Activated CD4-positive, alpha-beta T cell treated with anti-CD3 and anti-CD28 coated beads for 36 hours (primary cell): ENCODE measurements at regions of chr5 and their contacts with region 1.

Region 1: GRCh38 chr5:178204182-178204894 is at the start of gene HNRNPAB:
- DNase-seq: peak; percentile 97
- ATAC-seq: peak; percentile 84
- H3K4me3 Mint-ChIP-seq: peak within 1 kb of the TSS; percentile 82
- H3K27ac Mint-ChIP-seq: peak within 1 kb of the TSS; percentile 97
- H3K4me1 Mint-ChIP-seq: peaks cover 30% of the 10 kb centered on the region
- H3K27me3 Mint-ChIP-seq: no peaks in the 10 kb centered on the region
- total RNA-seq, gene HNRNPAB: 258 to 336 TPM

Region 2: DNA sequence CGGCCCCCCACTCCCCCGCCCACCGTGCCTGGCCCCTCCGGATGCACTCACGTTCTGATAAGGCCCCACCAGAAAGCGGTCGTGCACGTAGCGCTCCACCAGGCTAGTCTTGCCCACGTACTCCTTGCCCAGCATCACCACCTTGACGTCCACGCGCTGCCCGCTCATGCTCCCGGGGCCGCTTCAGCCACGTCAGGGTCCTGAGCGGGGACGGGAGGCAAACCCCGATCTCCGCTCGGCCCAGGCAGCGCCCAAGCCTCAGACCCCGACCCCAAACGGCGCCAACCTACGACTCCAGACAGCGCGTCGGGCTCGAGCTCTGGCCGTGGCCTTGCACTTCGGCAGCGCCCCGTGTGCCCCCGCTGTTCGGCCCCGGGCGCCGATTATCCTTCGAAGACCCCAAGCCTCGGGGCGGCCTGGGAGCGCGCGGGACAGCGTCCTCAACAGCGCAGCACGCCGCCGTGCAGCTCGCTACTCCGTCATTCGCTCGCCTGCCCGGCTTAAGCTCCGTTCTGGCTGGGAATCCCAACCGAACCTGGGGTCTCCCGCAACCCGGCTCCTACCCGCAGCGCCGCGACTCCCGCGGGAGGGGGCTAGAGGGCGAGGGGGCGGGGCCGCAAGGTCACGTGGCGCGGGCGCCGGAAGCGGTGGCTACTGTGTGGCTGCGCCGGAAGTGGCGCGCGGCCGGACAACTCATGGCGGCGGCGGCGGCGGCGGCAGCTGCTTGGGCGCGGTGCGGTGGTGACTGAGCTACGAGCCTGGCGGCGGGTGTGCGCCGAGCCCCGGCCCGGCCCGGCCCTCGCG is 901.0 kb before region 1 on chr5 and contains the starts of genes PRELID1 and RAB24:
- CTCF ChIA-PET with region 1: no interaction called
- POLR2A ChIA-PET with region 1: no interaction called
- intact Hi-C with region 1: loop called in 1 of 2 experiments (anchors 10 kb)
- DNase-seq: peak; percentile 95
- ATAC-seq: peak; percentile 69
- H3K4me3 Mint-ChIP-seq: peak within 1 kb of the TSS; percentile 93
- H3K27ac Mint-ChIP-seq: peak within 1 kb of the TSS; percentile 90
- H3K4me1 Mint-ChIP-seq: peaks cover 59% of the 10 kb centered on the region
- H3K27me3 Mint-ChIP-seq: no peaks in the 10 kb centered on the region
- total RNA-seq, gene PRELID1: 266 to 362 TPM
- total RNA-seq, gene RAB24: 10.9 to 21.0 TPM

Region 3: GRCh38 chr5:177592010-177592834 is 612.1 kb before region 1 on chr5 and contains the start of gene TMED9:
- CTCF ChIA-PET with region 1: no interaction called
- POLR2A ChIA-PET with region 1: no interaction called
- intact Hi-C with region 1: loop called in 1 of 2 experiments (anchors 10 kb)
- DNase-seq: peak; percentile 94
- ATAC-seq: peak; percentile 97
- H3K4me3 Mint-ChIP-seq: peak within 1 kb of the TSS; percentile 98
- H3K27ac Mint-ChIP-seq: peak within 1 kb of the TSS; percentile 99
- H3K4me1 Mint-ChIP-seq: peaks cover 29% of the 10 kb centered on the region
- H3K27me3 Mint-ChIP-seq: peaks cover 5% of the 10 kb centered on the region
- total RNA-seq, gene TMED9: 83.2 to 109 TPM

Region 4: GRCh38 chr5:178130604-178131485 is 73.5 kb before region 1 on chr5 and contains the start of gene RMND5B:
- CTCF ChIA-PET with region 1: no interaction called
- POLR2A ChIA-PET with region 1: no interaction called
- intact Hi-C with region 1: loop called in 1 of 2 experiments (anchors 1 kb)
- DNase-seq: peak; percentile 90
- ATAC-seq: peak; percentile 89
- H3K4me3 Mint-ChIP-seq: peak within 1 kb of the TSS; percentile 80
- H3K27ac Mint-ChIP-seq: peak within 1 kb of the TSS; percentile 90
- H3K4me1 Mint-ChIP-seq: peaks cover 25% of the 10 kb centered on the region
- H3K27me3 Mint-ChIP-seq: no peaks in the 10 kb centered on the region
- total RNA-seq, gene RMND5B: 24.1 to 28.7 TPM

Region 5: GRCh38 chr5:178232124-178232919 is 28.0 kb after region 1 on chr5 and contains the start of gene PHYKPL:
- CTCF ChIA-PET with region 1: interaction called, 4 read pairs
- POLR2A ChIA-PET with region 1: interaction called, 6 read pairs
- intact Hi-C with region 1: loop called in 1 of 2 experiments (anchors 1 kb)
- DNase-seq: peak; percentile 81
- ATAC-seq: peak; percentile 70
- H3K4me3 Mint-ChIP-seq: peak within 1 kb of the TSS; percentile 80
- H3K27ac Mint-ChIP-seq: peak within 1 kb of the TSS; percentile 84
- H3K4me1 Mint-ChIP-seq: peaks cover 56% of the 10 kb centered on the region
- H3K27me3 Mint-ChIP-seq: no peaks in the 10 kb centered on the region
- total RNA-seq, gene PHYKPL: 67.2 to 68.4 TPM

Region 6: DNA sequence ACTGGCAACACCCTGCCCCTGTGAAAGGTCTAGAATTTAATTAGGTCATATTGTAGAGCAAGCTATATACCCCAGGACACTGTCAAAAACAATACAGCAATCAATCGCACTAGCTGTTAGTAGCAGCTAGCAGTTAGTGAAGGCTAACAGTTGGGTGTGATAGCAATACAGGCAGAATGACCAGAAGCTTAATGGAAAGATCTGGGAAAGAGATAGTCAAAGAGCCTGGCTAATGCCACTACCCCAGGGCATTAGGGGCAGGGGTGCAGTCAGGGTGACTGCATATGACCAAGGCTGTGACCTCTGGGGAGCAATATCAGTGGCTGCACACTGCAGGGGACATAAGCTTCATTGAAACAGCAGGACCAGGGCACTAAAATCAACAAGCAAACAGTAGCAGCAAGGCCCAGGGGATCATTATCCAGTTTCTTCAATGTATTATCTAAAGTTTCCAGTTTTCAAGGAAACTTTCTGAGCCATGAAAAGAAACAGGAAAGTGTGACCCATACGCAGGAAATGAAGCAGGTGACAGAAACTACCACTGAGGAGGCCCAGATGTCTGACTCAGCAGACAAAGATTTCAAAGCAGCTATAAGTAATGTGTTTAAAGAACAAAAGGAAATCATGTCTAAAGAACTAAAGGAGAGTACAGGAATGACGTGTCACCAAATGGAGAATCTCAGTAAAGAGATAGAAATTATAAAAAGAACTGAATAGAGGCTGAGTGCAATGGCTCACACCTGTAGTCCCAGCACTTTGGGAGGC is 938.3 kb after region 1 on chr5:
- CTCF ChIA-PET with region 1: no interaction called
- POLR2A ChIA-PET with region 1: no interaction called
- intact Hi-C with region 1: no loop called
- DNase-seq: peak; percentile 67
- ATAC-seq: peak; percentile 87
- H3K4me3 Mint-ChIP-seq: no peak overlapping the region
- H3K27ac Mint-ChIP-seq: peak overlapping the region; percentile 88
- H3K4me1 Mint-ChIP-seq: peaks cover 37% of the 10 kb centered on the region
- H3K27me3 Mint-ChIP-seq: no peaks in the 10 kb centered on the region